ENCODE measurements at regions of chrX and their contacts with region 1.

Region 1: DNA sequence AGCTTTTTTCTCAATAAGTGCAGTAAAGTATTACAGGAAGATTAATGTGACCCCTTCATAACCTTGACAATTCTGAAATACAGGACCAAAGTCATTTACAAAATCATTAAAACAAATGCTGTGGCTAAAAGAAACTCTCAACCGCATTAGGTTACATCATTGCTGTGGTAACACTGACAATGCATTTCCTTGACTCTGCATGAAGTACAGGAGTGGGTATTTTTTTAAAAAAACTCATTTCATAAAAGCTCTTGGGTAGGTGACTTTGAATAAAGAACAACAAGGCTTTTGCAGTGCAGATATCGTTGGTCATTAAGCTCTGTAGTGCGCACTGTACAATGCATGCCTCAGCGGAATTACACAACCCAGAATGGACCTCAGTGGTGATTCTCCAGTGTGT is 23.4 kb upstream of the XK start:
- DNase-seq: no peak
- ATAC-seq: no peak
- H3K4me3 ChIP-seq: no peak overlapping the region
- H3K4me3 Mint-ChIP-seq: no peak overlapping the region
- H3K27ac ChIP-seq: no peak overlapping the region
- H3K27ac Mint-ChIP-seq: no peak overlapping the region
- H3K4me1 ChIP-seq: no peaks in the 10 kb centered on the region
- H3K4me1 Mint-ChIP-seq: no peaks in the 10 kb centered on the region
- H3K27me3 ChIP-seq: no peaks in the 10 kb centered on the region
- H3K27me3 Mint-ChIP-seq: no peaks in the 10 kb centered on the region
- CTCF ChIP-seq: no peak

Region 2: GRCh38 chrX:37692918-37693317 is 30.7 kb after region 1 on chrX:
- CTCF ChIA-PET with region 1: no interaction called
- POLR2A ChIA-PET with region 1: interaction called, 10 read pairs
- intact Hi-C with region 1: no loop called
- DNase-seq: no peak
- ATAC-seq: no peak
- H3K4me3 ChIP-seq: no peak overlapping the region
- H3K4me3 Mint-ChIP-seq: no peak overlapping the region
- H3K27ac ChIP-seq: no peak overlapping the region
- H3K27ac Mint-ChIP-seq: no peak overlapping the region
- H3K4me1 ChIP-seq: no peaks in the 10 kb centered on the region
- H3K4me1 Mint-ChIP-seq: no peaks in the 10 kb centered on the region
- H3K27me3 ChIP-seq: no peaks in the 10 kb centered on the region
- H3K27me3 Mint-ChIP-seq: no peaks in the 10 kb centered on the region
- CTCF ChIP-seq: no peak

Measured in B cell (primary cell).